Endothelial cell of umbilical vein (primary cell): ENCODE measurements at regions of chr22 and their contacts with region 1.

Region 1: DNA sequence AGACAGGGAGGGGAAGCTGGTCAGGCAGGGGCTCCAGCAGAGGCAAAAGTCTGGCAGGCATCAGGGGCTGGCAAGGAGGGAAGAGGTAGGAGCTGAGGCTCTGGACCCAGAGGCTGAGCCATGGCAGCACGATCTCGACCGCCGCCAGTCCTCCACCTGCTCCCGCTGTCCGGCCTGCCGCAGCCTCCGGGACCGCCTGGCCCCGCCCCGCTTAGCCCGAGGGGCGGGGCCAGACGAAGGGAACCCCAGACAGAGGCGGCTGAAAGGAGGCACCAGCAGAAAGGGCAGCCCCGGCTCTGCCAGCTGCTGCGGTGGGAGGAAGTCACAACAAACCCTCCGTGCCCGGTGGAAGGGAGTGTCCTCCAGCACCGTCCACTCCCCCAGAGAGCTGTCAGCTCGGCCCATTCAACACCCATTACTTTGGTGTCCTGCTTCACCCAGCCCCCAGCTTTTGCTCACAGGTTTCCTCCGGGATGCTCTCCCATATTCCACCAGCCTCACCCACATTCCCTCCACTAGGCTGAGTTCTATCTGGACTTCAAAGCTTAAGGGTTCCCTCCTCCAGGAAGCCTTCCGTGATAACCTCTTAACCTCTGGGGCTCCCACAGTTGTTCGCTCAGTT is at the start of gene MFNG:
- DNase-seq: peak; percentile 80
- H3K4me3 ChIP-seq: peak within 1 kb of the TSS; percentile 61 to 90 (median 81)
- H3K27ac ChIP-seq: peak within 1 kb of the TSS; percentile 83
- H3K4me1 ChIP-seq: peaks cover 34% of the 10 kb centered on the region
- H3K27me3 ChIP-seq: no peaks in the 10 kb centered on the region
- CTCF ChIP-seq: peak; percentile 9 to 12
- POLR2A ChIP-seq: peak; percentile 96
- total RNA-seq, gene MFNG: 188 and 197 TPM in 2 replicates

Region 2: GRCh38 chr22:37472418-37473006 is 13.8 kb before region 1 on chr22:
- CTCF ChIA-PET with region 1: interaction called, 21 read pairs
- POLR2A ChIA-PET with region 1: no interaction called
- dilution Hi-C with region 1: no loop called
- intact Hi-C with region 1: no loop called
- DNase-seq: no peak
- H3K4me3 ChIP-seq: no peak overlapping the region
- H3K27ac ChIP-seq: no peak overlapping the region
- H3K4me1 ChIP-seq: no peaks in the 10 kb centered on the region
- H3K27me3 ChIP-seq: no peaks in the 10 kb centered on the region
- CTCF ChIP-seq: peak; percentile 49 to 71
- POLR2A ChIP-seq: no peak

Region 3: GRCh38 chr22:37498289-37498909 is 12.1 kb after region 1 on chr22:
- CTCF ChIA-PET with region 1: interaction called, 11 read pairs
- POLR2A ChIA-PET with region 1: interaction called, 5 read pairs
- dilution Hi-C with region 1: no loop called
- intact Hi-C with region 1: loop called (anchors 1 kb)
- DNase-seq: peak; percentile 20
- H3K4me3 ChIP-seq: no peak overlapping the region
- H3K27ac ChIP-seq: no peak overlapping the region
- H3K4me1 ChIP-seq: peaks cover 51% of the 10 kb centered on the region
- H3K27me3 ChIP-seq: no peaks in the 10 kb centered on the region
- CTCF ChIP-seq: peak; percentile 51 to 72
- POLR2A ChIP-seq: no peak

Region 4: GRCh38 chr22:37519268-37520195 is 33.2 kb after region 1 on chr22 and contains the start of gene CARD10:
- CTCF ChIA-PET with region 1: interaction called, 3 read pairs
- POLR2A ChIA-PET with region 1: no interaction called
- dilution Hi-C with region 1: no loop called
- intact Hi-C with region 1: loop called (anchors 2 kb)
- DNase-seq: peak; percentile 33
- H3K4me3 ChIP-seq: peak within 1 kb of the TSS; percentile 69 to 84 (median 78)
- H3K27ac ChIP-seq: no peak within 1 kb of the TSS
- H3K4me1 ChIP-seq: peaks cover 9% of the 10 kb centered on the region
- H3K27me3 ChIP-seq: no peaks in the 10 kb centered on the region
- CTCF ChIP-seq: no peak
- POLR2A ChIP-seq: peak; percentile 64
- total RNA-seq, gene CARD10: 39.5 and 40.6 TPM in 2 replicates

Region 5: DNA sequence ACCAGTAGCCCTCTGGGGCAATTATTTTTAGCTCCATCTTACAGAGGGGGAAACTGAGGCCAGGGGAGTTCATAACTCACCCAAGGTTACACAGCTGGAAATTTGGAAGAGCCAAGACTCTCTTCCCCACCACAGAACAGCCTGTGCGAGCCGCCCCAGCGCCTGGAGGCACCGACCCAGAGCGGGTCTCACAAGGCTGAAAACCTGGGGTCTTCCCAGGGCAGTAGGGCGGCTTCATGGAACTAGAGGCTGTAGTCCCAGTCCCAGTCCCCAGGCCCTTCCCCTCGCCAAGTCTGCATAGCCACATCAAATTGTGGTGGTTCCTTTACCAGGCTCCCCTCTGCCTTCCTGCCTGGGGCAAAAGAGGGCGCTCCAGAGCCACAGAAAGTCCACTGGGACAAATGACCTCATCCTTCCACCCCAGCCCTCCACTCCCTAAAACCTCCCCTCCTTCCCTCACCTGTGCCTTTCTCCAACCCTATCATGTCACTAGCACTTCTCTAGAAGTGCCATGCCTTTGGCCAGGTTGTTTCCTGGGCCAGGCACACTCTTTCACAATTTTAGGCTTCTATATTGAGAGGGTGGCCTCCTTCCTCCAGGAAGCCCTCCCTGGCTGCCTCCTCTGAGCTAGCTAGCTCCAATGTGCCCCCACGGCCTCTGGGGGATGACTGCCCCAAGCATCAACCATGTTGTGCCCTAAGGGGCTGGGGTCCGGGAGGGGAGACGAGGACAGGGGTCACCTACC is 58.8 kb after region 1 on chr22:
- CTCF ChIA-PET with region 1: no interaction called
- POLR2A ChIA-PET with region 1: no interaction called
- dilution Hi-C with region 1: no loop called
- intact Hi-C with region 1: no loop called
- DNase-seq: peak; percentile 80
- H3K4me3 ChIP-seq: no peak overlapping the region
- H3K27ac ChIP-seq: peak overlapping the region; percentile 91
- H3K4me1 ChIP-seq: peaks cover 22% of the 10 kb centered on the region
- H3K27me3 ChIP-seq: no peaks in the 10 kb centered on the region
- CTCF ChIP-seq: peak; percentile 88 to 91
- POLR2A ChIP-seq: no peak

Region 6: GRCh38 chr22:37561212-37562048 is 75.1 kb after region 1 on chr22:
- CTCF ChIA-PET with region 1: interaction called, 4 read pairs
- POLR2A ChIA-PET with region 1: no interaction called
- dilution Hi-C with region 1: no loop called
- intact Hi-C with region 1: loop called (anchors 2 kb)
- DNase-seq: peak; percentile 88
- H3K4me3 ChIP-seq: peak overlapping the region; percentile 71 to 86 (median 74)
- H3K27ac ChIP-seq: peak overlapping the region; percentile 99
- H3K4me1 ChIP-seq: peaks cover 61% of the 10 kb centered on the region
- H3K27me3 ChIP-seq: no peaks in the 10 kb centered on the region
- CTCF ChIP-seq: peak; percentile 94
- POLR2A ChIP-seq: peak; percentile 47